Prostate gland (tissue), 2 donors: ENCODE measurements at regions of chr17 and their contacts with region 1.

Region 1: DNA sequence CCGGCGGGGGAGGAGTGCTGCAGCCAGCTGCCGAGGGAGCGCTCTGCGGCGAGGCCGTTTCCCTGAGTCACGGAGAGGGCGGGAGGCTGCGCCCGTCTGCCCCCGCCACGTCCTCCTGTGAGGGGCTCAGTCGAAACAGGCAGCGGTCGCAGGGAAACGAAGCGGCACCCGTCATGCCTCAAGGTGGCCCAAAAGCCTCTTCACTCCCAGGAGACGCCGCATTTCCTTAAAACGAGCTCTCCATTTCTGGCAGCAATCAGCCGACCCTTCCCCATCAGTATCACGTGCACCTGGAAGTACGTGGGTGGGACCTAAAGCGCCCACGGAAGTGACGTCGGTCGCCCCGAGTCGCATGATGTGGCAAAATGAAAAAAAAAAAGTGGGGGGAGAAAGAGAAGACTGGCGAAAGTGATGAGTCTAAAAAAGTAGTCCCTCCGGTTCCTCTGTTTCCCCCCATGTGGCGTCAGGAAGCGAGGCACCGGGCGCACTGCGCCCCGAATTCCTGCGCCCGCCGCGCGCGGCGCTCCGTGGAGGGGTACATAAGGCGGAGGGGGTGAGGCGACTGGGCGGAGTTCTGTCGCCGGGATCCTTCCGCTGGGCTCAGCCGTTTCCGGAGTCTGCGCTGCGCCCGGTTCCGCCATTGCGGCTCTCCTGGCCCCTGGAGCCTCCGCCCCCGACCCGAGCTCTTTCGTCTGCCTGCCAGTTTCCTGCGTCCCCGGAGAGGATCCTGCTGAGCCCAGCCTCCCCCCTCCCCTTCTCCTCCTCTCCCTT is at the start of gene CLTC:
- DNase-seq: peak; percentile 90
- H3K4me3 ChIP-seq: peak within 1 kb of the TSS; percentile 88 to 98
- H3K27ac ChIP-seq: peak within 1 kb of the TSS; percentile 98 to 99
- H3K4me1 ChIP-seq: peaks cover 4% of the 10 kb centered on the region
- H3K27me3 ChIP-seq: no peaks in the 10 kb centered on the region
- CTCF ChIP-seq: peak in 1 of 4 experiments; percentile 17
- POLR2A ChIP-seq: peak; percentile 86
- total RNA-seq, gene CLTC: 202 to 206 TPM

Region 2: GRCh38 chr17:59565171-59565969 is 54.1 kb before region 1 on chr17 and contains the start of gene DHX40:
- intact Hi-C with region 1: loop called (anchors 10 kb)
- DNase-seq: peak; percentile 92
- H3K4me3 ChIP-seq: peak within 1 kb of the TSS; percentile 70 to 89
- H3K27ac ChIP-seq: peak within 1 kb of the TSS; percentile 81 to 91
- H3K4me1 ChIP-seq: no peaks in the 10 kb centered on the region
- H3K27me3 ChIP-seq: no peaks in the 10 kb centered on the region
- CTCF ChIP-seq: no peak
- POLR2A ChIP-seq: peak; percentile 66
- total RNA-seq, gene DHX40: 43.7 to 53.7 TPM

Region 3: GRCh38 chr17:59734226-59734625 is 114.7 kb after region 1 on chr17:
- intact Hi-C with region 1: no loop called
- DNase-seq: no peak
- H3K4me3 ChIP-seq: no peak overlapping the region
- H3K27ac ChIP-seq: no peak overlapping the region
- H3K4me1 ChIP-seq: no peaks in the 10 kb centered on the region
- H3K27me3 ChIP-seq: no peaks in the 10 kb centered on the region
- CTCF ChIP-seq: no peak
- POLR2A ChIP-seq: no peak